CD4-positive, alpha-beta memory T cell (primary cell): ENCODE measurements at regions of chr22 and their contacts with region 1.

Region 1: DNA sequence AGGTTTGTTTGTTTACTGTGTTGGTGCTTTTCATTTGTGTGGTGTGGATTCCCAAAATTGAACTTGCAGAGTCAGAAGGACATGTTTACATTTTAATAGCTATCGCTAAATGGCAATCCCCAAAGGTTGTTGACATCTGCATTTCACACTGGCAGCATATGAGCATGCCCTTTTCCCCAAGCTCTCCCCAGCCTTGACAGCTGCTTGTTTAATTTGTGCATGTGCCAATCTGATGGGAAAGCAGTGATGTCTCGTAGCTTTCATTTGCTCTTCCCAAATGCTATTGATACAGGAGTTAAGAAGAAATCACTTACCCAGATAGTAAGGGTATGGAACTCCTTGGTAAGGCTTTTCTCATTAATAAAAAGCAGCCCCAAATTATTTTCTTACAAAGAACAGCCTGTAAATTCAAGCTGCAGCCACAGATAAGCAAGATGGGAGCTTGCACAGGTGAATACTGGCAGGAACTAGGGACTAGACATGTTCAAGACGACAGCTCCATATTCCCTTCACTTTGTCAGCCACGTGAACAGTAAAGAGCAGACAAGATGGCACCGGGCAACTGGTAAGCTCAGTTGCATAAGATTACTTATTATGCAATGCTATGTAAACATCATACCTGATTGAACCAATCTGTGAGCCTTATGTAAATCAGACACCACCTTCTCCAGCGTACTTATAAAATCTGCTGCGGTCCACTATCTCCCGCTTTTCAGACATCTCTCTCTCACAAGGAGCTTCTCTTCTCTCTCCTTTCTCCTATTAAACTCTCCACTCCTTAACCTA is 87.4 kb downstream of the IGLL5 start:
- DNase-seq: no peak
- H3K4me3 ChIP-seq: no peak overlapping the region
- H3K4me3 Mint-ChIP-seq: no peak overlapping the region
- H3K27ac ChIP-seq: no peak overlapping the region
- H3K27ac Mint-ChIP-seq: no peak overlapping the region
- H3K4me1 ChIP-seq: no peaks in the 10 kb centered on the region
- H3K4me1 Mint-ChIP-seq: no peaks in the 10 kb centered on the region
- H3K27me3 ChIP-seq: no peaks in the 10 kb centered on the region
- H3K27me3 Mint-ChIP-seq: peaks cover 17 to 26% of the 10 kb centered on the region in 2 donors

Region 2: GRCh38 chr22:23248583-23248982 is 273.6 kb after region 1 on chr22:
- CTCF ChIA-PET with region 1: no interaction called
- POLR2A ChIA-PET with region 1: no interaction called
- intact Hi-C with region 1: no loop called
- DNase-seq: no peak
- H3K4me3 ChIP-seq: no peak overlapping the region
- H3K4me3 Mint-ChIP-seq: peak overlapping the region in 2 of 8 donors; percentile 51 to 62
- H3K27ac ChIP-seq: no peak overlapping the region
- H3K27ac Mint-ChIP-seq: peak overlapping the region; percentile 13 to 88 (median 64)
- H3K4me1 ChIP-seq: peaks cover 72% of the 10 kb centered on the region
- H3K4me1 Mint-ChIP-seq: peaks cover 26 to 82% (median 64%) of the 10 kb centered on the region in 4 donors
- H3K27me3 ChIP-seq: no peaks in the 10 kb centered on the region
- H3K27me3 Mint-ChIP-seq: no peaks in the 10 kb centered on the region

Region 3: GRCh38 chr22:23376256-23376655 is 401.3 kb after region 1 on chr22:
- CTCF ChIA-PET with region 1: no interaction called
- POLR2A ChIA-PET with region 1: no interaction called
- intact Hi-C with region 1: loop called (anchors 5 kb)
- DNase-seq: peak in 3 of 5 donors; percentile 14 to 23 (median 16)
- H3K4me3 ChIP-seq: no peak overlapping the region
- H3K4me3 Mint-ChIP-seq: no peak overlapping the region
- H3K27ac ChIP-seq: no peak overlapping the region
- H3K27ac Mint-ChIP-seq: no peak overlapping the region
- H3K4me1 ChIP-seq: no peaks in the 10 kb centered on the region
- H3K4me1 Mint-ChIP-seq: no peaks in the 10 kb centered on the region
- H3K27me3 ChIP-seq: no peaks in the 10 kb centered on the region
- H3K27me3 Mint-ChIP-seq: peaks cover 7 to 8% of the 10 kb centered on the region in 2 donors